ENCODE measurements at regions of chr3 and their contacts with region 1.

Region 1: DNA sequence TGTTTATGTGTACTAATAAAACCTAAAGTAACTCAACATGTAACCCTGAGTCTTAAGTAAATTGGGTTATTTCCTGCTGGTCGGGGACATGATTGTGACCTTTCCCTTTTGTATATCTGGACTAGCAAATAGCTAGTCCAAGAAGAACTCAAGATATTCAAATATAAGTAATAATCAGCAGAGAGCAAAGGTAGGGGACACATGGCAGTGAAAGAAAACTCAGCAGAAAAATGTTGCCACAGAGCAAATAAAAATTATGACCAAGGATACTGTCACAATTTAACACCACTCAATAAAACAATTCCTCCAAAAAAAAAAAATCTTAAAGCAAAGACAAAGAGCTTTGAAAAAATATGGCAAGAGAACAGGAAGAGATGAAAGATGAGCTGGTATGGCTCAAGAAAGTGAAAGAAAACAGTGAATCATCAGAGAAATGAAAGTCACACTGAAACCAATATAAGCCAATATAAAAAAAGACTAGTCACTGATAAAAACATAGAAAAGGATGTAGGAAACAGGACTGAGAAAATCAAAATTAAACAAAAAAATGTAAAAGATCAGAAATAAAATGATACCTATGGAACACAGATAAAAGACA is 43.4 kb downstream of the HLTF start:
- DNase-seq: no peak
- H3K4me3 Mint-ChIP-seq: peak overlapping the region; percentile 1
- H3K27ac Mint-ChIP-seq: peak overlapping the region; percentile 7
- H3K4me1 Mint-ChIP-seq: peaks cover 28% of the 10 kb centered on the region
- H3K27me3 Mint-ChIP-seq: no peaks in the 10 kb centered on the region

Region 2: GRCh38 chr3:149009732-149010131 is 33.2 kb before region 1 on chr3:
- intact Hi-C with region 1: loop called (anchors 1 kb)
- DNase-seq: peak; percentile 47
- H3K4me3 Mint-ChIP-seq: no peak overlapping the region
- H3K27ac Mint-ChIP-seq: peak overlapping the region; percentile 71
- H3K4me1 Mint-ChIP-seq: peaks cover 36% of the 10 kb centered on the region
- H3K27me3 Mint-ChIP-seq: no peaks in the 10 kb centered on the region

Region 3: GRCh38 chr3:149058602-149059001 is 15.7 kb after region 1 on chr3:
- intact Hi-C with region 1: loop called (anchors 2 kb)
- DNase-seq: no peak
- H3K4me3 Mint-ChIP-seq: no peak overlapping the region
- H3K27ac Mint-ChIP-seq: no peak overlapping the region
- H3K4me1 Mint-ChIP-seq: no peaks in the 10 kb centered on the region
- H3K27me3 Mint-ChIP-seq: no peaks in the 10 kb centered on the region

Region 4: DNA sequence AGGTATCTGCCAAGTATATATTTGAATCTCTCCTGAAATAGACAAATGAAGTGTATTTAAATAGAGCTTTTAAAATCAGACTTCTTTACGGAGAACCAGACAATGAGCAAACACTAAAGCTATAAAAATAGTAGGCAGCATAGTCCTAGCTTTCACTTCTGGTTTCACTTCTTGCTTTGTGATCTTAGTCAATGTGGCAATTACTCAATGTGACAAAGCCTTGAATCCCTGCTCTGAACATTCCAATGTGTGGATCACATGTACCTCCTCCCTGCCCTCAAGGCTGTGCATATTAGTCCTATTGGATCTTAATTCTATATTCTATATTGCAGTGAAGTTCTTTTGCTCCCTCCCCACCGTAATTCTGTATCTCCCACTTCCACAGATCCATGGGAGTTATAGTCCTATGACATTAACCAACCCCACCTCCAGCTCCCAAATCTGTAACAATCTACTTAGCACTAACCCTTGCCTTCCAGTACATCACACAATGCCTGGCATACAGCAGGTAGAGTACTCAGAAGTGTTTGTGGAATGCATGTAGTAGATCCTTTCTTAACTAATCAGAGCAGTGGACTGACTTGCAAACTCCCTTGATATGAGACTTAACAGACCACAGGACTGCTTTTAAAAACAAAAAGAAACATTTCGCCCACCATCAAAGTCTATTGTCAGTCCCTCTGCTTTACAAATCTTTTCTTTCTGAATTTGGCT is 203.0 kb after region 1 on chr3:
- intact Hi-C with region 1: loop called (anchors 5 kb)
- DNase-seq: no peak
- H3K4me3 Mint-ChIP-seq: peak overlapping the region; percentile 16
- H3K27ac Mint-ChIP-seq: peak overlapping the region; percentile 51
- H3K4me1 Mint-ChIP-seq: peaks cover 37% of the 10 kb centered on the region
- H3K27me3 Mint-ChIP-seq: peaks cover 4% of the 10 kb centered on the region

Region 5: GRCh38 chr3:149339931-149340309 is 297.0 kb after region 1 on chr3:
- intact Hi-C with region 1: no loop called
- DNase-seq: no peak
- H3K4me3 Mint-ChIP-seq: no peak overlapping the region
- H3K27ac Mint-ChIP-seq: no peak overlapping the region
- H3K4me1 Mint-ChIP-seq: no peaks in the 10 kb centered on the region
- H3K27me3 Mint-ChIP-seq: peaks cover 12% of the 10 kb centered on the region